Motor neuron (in vitro differentiated cells): ENCODE measurements at regions of chr10 and their contacts with region 1.

Region 1: DNA sequence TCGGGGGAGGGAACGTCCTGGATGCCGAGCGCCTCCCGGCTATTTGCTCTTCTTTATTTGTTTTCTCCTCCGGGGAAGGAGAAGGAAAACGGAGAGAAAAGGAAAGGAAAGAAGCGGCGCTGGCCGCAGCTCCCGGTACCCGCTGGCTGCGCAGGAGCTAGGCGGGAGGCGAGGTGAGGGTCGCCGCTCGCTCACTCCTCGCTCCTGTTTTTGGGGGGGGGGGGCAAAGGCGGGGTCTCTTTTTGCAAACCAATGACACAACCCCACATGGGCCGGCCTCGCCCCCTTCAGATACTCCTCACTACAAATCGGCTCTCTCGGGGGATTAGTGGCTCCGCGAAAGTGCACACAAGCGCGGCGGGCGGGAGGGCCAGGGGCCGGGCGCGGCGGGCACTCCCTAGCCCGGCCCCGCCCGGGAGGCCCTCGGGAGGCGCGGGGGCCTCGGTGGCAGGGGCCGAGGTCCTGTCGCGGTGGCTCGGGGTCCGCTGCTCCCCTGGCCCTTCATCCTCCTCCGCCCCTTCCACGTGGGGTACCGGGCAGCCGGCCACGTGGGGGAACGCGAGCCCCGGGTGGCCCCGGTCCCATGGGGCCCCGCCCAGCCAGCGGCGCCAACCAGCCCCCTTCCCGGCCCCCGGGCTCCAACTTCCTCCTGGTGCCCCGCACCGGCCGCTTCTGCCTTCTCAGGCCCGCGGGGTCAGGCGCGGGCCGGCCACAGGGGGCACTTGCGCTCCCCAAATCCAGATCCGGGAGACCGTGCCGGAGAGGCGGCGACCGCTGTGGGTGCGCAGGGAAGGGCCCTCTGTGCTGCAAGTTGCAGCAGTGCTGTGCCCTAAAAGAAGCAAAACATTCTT is 718 bp upstream of the CTBP2 start:
- ATAC-seq: peak; percentile 45 to 82 (median 73)
- H3K4me3 ChIP-seq: peak overlapping the region; percentile 84 to 99 (median 95)
- H3K27ac ChIP-seq: peak overlapping the region; percentile 91 to 97
- H3K4me1 ChIP-seq: peaks cover 16 to 18% of the 10 kb centered on the region in 2 donors

Region 2: GRCh38 chr10:124916098-124916584 is 244.9 kb before region 1 on chr10:
- in situ Hi-C with region 1: no loop called
- ATAC-seq: peak; percentile 3 to 10 (median 6)
- H3K4me3 ChIP-seq: peak overlapping the region; percentile 86 to 100 (median 92)
- H3K27ac ChIP-seq: peak overlapping the region; percentile 99
- H3K4me1 ChIP-seq: peaks cover 7% of the 10 kb centered on the region in 2 donors

Region 3: GRCh38 chr10:125038637-125039036 is 122.4 kb before region 1 on chr10:
- in situ Hi-C with region 1: no loop called
- ATAC-seq: peak in 3 of 8 experiments; percentile 14 to 18 (median 16)
- H3K4me3 ChIP-seq: no peak overlapping the region
- H3K27ac ChIP-seq: no peak overlapping the region
- H3K4me1 ChIP-seq: peaks cover 73 to 79% of the 10 kb centered on the region in 2 donors

Region 4: DNA sequence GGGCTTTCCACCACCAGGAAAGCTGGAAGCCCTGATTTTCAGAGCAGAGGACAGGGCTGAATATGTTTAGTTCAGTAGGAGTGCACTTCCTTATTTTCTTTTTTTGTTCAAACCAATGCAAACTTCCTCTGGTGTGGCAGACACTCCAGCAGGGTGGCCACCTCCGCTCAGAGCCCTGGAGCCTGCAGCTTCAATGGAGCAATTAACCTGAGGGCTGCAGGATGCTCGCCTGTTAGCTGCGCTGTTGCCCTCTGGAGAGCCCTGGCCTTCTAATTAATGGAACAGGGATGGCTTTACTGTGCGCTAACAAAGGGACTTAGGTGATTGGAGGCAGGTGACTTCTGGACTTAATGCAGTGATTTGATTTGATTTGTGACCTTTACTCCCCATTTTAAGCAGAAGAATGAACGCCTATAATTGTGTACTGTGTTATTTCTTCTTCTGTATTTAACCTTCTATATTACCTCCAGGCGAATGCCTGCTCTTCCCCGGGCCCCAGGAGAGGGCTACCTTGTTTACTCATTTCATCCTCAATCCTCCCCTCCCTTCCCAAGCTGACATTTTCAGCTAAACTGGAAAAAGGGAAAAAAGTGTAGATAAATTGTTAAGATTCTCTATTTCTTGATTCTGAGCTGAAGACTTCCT is 122.2 kb after region 1 on chr10:
- in situ Hi-C with region 1: no loop called
- ATAC-seq: peak in 5 of 8 experiments; percentile 59 to 94 (median 88)
- H3K4me3 ChIP-seq: no peak overlapping the region
- H3K27ac ChIP-seq: no peak overlapping the region
- H3K4me1 ChIP-seq: peaks cover 6 to 13% of the 10 kb centered on the region in 2 donors

Region 5: DNA sequence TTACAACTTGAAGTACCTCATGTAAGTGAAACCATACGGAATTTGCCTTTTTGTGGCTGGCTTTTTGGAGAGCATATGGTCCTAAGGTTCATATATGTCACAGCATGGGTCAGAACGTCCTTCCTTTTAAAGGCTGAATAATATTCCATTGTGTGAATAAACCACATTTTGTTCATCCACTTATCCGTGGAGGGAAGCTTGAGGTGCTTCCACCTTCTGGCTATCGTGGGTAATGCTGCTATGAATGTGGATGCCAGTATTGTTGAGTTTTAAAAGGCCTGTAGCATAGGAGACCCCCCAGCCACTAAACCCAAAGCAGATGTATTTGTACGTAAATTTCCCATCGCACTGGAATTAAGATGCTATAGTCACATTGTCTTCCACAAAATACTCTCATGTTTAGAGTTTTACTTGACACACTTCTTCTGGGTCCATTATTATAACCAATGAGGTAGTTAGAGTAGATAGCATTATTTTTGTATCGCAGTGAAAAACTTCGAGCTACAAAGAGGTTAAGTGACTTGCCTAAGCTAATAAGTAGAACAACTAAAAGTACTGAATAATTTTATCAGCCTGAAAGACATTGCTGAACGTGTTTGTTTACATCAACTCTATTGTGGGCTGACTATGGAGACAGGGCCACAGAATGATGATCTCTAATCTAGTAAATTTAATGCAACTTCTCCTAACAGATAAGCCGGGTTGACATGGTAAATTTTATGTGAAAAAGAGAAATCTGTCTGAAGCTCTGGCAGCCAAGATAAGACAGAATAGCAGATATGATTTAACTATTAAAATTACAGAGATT is 182.2 kb after region 1 on chr10:
- in situ Hi-C with region 1: loop called in 1 of 9 experiments (anchors 25 kb)
- ATAC-seq: peak in 1 of 8 experiments; percentile 41
- H3K4me3 ChIP-seq: no peak overlapping the region
- H3K27ac ChIP-seq: no peak overlapping the region
- H3K4me1 ChIP-seq: peaks cover 0 to 5% of the 10 kb centered on the region in 2 donors

Region 6: DNA sequence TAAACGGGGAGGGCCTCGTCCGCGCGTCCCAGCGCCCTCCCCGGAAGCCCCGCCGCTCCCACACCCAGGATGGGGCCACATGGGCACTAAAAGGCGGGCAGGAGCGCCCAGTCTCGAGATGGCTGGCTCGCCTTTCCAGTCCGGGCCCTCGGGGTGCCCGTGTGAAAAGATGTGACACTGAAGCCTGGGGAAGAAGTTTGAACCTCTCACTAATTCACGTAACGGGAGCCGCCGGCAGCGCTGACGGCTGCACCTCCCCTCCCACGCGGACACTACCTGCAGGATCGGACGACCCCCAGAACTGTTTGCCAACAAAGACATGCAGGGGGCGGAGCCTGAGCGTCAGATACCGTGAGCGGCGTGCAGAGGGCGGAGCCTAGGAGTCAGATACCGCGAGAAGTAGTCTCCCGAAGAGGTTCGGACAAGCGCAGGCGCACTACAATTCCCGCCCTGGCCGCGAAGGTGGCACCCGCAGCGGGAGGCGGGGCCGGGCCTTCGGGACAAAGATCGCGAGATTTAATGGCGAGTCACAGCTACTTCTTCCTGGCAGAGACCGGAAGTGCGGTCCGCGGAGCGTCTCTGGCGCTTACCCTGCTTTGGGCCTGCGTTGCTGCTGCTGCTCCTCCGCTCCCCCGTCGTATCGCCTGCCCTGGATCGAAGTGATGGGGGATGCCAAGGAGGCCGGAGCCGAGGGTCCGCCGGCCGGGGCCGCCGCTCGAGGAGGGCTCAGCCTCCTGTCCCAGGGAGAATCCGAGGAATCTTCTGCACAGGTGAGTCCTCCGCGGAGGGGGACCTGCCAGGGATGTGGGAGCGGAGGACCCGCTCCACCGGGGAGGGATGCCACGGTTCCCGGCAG is 558.3 kb after region 1 on chr10 and contains the start of gene EDRF1:
- in situ Hi-C with region 1: loop called in 1 of 9 experiments (anchors 25 kb)
- ATAC-seq: peak; percentile 88 to 97 (median 96)
- H3K4me3 ChIP-seq: peak within 1 kb of the TSS; percentile 92 to 98 (median 94)
- H3K27ac ChIP-seq: peak within 1 kb of the TSS; percentile 84 to 91
- H3K4me1 ChIP-seq: peaks cover 6 to 9% of the 10 kb centered on the region in 2 donors
- total RNA-seq, gene EDRF1: 22.6 to 51.2 (median 28.4) TPM